ENCODE measurements at regions of chr1 and their contacts with region 1.

Region 1: DNA sequence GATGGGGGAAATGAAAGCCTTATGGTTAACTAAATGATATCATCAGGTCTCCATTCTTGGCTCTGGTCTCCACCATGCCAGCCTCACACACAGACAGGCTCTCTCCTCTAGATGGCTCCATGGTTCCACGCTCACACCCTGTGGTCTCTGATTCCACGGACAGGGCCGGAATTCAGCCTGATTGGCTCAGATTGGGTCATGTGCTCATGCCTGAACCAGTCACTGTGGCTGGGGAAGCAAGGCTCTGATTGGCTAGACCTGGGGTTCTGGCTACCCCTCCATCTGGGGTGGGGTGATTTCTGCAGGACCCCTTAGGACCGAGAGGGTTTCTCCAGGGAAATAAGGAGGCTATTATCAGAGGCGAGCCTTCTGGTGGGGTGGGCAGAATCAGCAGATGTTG is 277.0 kb downstream of the PTPRU start:
- DNase-seq: peak; percentile 60
- H3K4me3 ChIP-seq: no peak overlapping the region; a peak in 1 of 4 replicates
- H3K27ac ChIP-seq: no peak overlapping the region; a peak in 1 of 4 replicates
- H3K4me1 ChIP-seq: peaks cover 0 to 20% of the 10 kb centered on the region in 2 experiments; a peak in 2 of 4 replicates
- H3K27me3 ChIP-seq: no peaks in the 10 kb centered on the region
- CTCF ChIP-seq: peak; percentile 55
- EP300 ChIP-seq: no peak
- RAD21 ChIP-seq: peak; percentile 84

Region 2: DNA sequence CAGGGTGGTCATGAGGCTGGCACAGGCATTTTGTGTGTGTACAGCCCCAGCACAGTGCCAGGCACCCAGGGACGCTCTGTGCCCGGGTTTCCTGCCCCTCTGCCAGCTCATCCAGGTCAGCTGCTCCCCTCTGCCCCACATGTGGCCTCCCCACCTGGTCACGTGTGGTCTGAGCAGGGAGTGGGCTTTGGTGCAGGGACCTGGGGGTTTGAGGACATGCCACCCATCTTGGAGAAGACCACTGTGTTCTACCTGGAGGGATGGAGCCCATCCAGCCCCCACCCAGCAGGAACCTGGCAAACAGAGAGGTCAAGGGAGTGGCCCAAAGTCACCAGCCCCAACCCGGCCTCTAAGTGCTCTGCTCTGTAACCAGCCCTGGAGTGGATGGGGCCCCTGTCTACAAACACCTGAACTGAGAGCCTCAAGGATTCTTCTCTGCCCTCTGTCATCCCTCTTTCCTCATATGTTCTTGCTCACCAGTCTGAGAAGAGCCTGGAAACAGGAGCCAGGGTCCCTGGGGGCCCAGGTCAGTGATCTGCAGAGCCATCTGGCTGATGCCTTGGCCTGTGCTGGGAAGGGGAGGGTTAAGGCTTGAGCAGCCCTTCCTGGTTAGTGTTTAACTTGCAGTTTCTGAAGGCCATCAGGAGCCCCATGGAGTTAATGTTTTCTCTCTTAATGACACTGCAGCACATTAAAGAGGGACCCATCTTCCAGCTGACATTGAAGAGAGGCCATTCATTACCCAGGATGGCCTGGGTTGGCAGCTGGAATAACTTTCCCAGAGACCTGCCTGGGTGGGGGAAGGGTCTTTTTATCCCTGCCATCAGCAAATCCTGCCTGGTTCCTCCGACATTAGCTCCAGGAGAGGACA is 41.7 kb before region 1 on chr1:
- CTCF ChIA-PET with region 1: interaction called, 10 read pairs
- POLR2A ChIA-PET with region 1: interaction called, 3 read pairs
- DNase-seq: peak; percentile 64
- H3K4me3 ChIP-seq: no peak overlapping the region
- H3K27ac ChIP-seq: peak overlapping the region; percentile 35 to 100; a peak in 3 of 4 replicates
- H3K4me1 ChIP-seq: peaks cover 0 to 85% of the 10 kb centered on the region in 2 experiments; a peak in 2 of 4 replicates
- H3K27me3 ChIP-seq: no peaks in the 10 kb centered on the region; the same call in 1 of the 2 replicates
- CTCF ChIP-seq: no peak
- EP300 ChIP-seq: peak in 1 of 2 experiments; percentile 87; a peak in 2 of 4 replicates
- RAD21 ChIP-seq: 0 out of 2 replicates have a peak, but pooled peaks have one; percentile 19

Region 3: GRCh38 chr1:29767088-29767685 is 253.8 kb after region 1 on chr1:
- CTCF ChIA-PET with region 1: no interaction called
- POLR2A ChIA-PET with region 1: no interaction called
- DNase-seq: no peak
- H3K4me3 ChIP-seq: no peak overlapping the region
- H3K27ac ChIP-seq: no peak overlapping the region
- H3K4me1 ChIP-seq: no peaks in the 10 kb centered on the region
- H3K27me3 ChIP-seq: no peaks in the 10 kb centered on the region
- CTCF ChIP-seq: no peak
- EP300 ChIP-seq: no peak
- RAD21 ChIP-seq: no peak

Measured in SK-N-SH (cell line).